GM10248 (cell line): ENCODE measurements at regions of chr10 and their contacts with region 1.

Region 1: DNA sequence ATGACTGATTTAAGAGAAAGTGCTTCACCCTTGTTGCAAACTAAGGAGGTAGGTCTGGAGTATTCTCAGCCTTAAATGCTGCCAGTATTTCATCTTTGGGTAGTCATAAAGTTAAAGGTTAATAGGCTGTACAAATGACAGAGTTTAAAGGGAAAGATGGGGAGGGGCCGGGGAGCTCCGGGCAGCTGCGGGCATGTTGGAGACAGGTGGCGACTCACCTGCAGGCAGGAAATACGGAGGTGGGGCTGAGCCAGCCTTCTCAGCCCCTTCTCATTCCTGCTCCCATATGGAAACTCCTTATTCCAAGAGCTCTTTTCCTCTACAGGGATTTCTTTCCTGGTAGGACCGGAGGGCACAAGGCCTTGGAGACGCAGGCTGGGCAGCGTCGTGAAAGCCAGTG is 31.8 kb upstream of the HMX3 start:
- DNase-seq: no peak
- CTCF ChIP-seq: no peak

Region 2: DNA sequence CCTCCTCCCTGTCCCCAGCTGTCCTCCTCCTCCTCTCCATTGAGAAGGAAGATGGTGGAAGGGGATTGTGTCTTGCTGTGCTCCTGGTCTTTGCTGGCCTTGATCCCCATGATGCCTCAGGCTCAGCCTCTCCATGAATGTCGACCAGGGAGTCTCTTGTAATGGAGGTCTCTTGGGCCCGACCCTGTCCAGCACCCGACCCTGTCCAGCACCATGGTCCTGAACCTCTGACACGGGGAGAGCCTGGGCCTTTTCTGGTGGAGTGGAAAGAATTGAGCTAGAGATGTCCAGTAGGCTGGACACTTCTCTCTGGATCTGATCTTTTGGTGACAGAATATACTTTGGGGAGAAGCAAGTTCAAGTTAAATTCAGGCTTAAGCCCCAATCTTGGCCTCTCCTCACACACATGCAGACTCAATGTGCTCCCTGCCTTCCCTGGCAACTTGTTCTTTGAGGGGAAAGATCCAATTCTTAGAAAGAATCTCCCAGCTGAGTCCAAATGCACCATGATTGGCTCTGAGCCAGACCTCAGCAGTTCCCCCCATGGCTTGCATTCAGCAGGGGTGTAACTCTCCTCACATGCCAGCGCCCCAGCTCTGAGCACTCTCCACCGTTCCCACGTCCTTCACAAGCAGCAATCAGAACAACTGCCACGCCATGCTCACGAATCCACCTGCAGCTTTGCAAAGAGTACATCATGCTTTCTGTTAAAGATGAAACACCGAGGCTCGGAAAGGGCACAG is 10.3 kb before region 1 on chr10:
- CTCF ChIA-PET with region 1: interaction called, 12 read pairs
- POLR2A ChIA-PET with region 1: no interaction called
- DNase-seq: no peak
- CTCF ChIP-seq: no peak

Region 3: GRCh38 chr10:123380497-123381085 is 276.6 kb after region 1 on chr10:
- CTCF ChIA-PET with region 1: no interaction called
- POLR2A ChIA-PET with region 1: no interaction called
- DNase-seq: no peak
- CTCF ChIP-seq: peak; percentile 18